ENCODE measurements at regions of chr16 and their contacts with region 1.

Region 1: GRCh38 chr16:54212893-54213292 is 73.7 kb downstream of the IRX3 start:
- DNase-seq: no peak
- H3K4me3 Mint-ChIP-seq: no peak overlapping the region
- H3K27ac Mint-ChIP-seq: no peak overlapping the region
- H3K4me1 Mint-ChIP-seq: no peaks in the 10 kb centered on the region
- H3K27me3 Mint-ChIP-seq: peaks cover 98% of the 10 kb centered on the region
- CTCF ChIP-seq: no peak

Region 2: DNA sequence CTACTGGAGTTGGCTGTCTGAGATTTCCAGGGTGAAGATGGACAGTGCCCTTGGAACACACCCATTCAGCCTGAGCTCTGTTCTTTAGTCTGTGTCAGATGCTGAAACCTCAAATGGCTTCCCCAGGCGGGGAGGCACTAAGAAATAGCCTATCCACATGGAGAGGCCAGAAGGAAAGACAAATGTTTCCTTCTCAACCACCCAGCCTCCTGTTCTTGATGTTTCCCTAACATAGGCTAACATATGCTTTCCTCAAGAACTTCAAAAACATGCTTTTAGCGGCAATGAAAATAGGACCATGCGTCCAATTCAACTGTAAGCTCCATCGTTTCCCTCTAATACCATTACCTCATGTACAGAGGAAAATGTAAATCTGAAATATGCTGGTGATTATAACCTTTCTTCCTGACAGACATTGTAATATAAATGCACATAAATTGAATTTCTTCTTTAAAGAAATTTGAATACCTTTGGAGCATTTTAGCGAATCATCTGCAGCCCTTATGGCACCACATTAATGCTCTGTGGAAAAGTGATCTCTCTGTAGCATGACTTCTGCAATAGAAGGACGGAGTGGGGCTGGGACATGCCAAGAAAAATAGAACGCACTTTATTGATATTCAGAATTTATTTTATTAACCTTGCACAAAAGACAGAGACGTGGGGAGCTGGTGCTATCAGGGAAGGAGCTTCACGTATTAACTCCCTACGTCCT is 13.6 kb after region 1 on chr16:
- CTCF ChIA-PET with region 1: interaction called, 10 read pairs
- intact Hi-C with region 1: no loop called
- DNase-seq: no peak
- H3K4me3 Mint-ChIP-seq: no peak overlapping the region
- H3K27ac Mint-ChIP-seq: no peak overlapping the region
- H3K4me1 Mint-ChIP-seq: no peaks in the 10 kb centered on the region
- H3K27me3 Mint-ChIP-seq: peaks cover 11% of the 10 kb centered on the region
- CTCF ChIP-seq: no peak

Region 3: GRCh38 chr16:54297154-54297553 is 84.3 kb after region 1 on chr16:
- CTCF ChIA-PET with region 1: no interaction called
- intact Hi-C with region 1: no loop called
- DNase-seq: no peak
- H3K4me3 Mint-ChIP-seq: no peak overlapping the region
- H3K27ac Mint-ChIP-seq: no peak overlapping the region
- H3K4me1 Mint-ChIP-seq: no peaks in the 10 kb centered on the region
- H3K27me3 Mint-ChIP-seq: peaks cover 19% of the 10 kb centered on the region
- CTCF ChIP-seq: no peak

Region 4: GRCh38 chr16:54375071-54375470 is 162.2 kb after region 1 on chr16:
- CTCF ChIA-PET with region 1: no interaction called
- intact Hi-C with region 1: no loop called
- DNase-seq: no peak
- H3K4me3 Mint-ChIP-seq: no peak overlapping the region
- H3K27ac Mint-ChIP-seq: no peak overlapping the region
- H3K4me1 Mint-ChIP-seq: no peaks in the 10 kb centered on the region
- H3K27me3 Mint-ChIP-seq: peaks cover 37% of the 10 kb centered on the region
- CTCF ChIP-seq: no peak